Dorsolateral prefrontal cortex (tissue), 120 donors: ENCODE measurements at regions of chr20 and their contacts with region 1.

Region 1: GRCh38 chr20:53547664-53548239 is 45.9 kb downstream of the ZNF217 start:
- DNase-seq: peak in 2 of 10 donors; percentile 4 to 31
- H3K4me3 ChIP-seq: no peak overlapping the region
- H3K27ac ChIP-seq: no peak overlapping the region
- H3K27me3 ChIP-seq: no peaks in the 10 kb centered on the region
- CTCF ChIP-seq: peak in 55 of 56 donors; percentile 36 to 80 (median 73)

Region 2: DNA sequence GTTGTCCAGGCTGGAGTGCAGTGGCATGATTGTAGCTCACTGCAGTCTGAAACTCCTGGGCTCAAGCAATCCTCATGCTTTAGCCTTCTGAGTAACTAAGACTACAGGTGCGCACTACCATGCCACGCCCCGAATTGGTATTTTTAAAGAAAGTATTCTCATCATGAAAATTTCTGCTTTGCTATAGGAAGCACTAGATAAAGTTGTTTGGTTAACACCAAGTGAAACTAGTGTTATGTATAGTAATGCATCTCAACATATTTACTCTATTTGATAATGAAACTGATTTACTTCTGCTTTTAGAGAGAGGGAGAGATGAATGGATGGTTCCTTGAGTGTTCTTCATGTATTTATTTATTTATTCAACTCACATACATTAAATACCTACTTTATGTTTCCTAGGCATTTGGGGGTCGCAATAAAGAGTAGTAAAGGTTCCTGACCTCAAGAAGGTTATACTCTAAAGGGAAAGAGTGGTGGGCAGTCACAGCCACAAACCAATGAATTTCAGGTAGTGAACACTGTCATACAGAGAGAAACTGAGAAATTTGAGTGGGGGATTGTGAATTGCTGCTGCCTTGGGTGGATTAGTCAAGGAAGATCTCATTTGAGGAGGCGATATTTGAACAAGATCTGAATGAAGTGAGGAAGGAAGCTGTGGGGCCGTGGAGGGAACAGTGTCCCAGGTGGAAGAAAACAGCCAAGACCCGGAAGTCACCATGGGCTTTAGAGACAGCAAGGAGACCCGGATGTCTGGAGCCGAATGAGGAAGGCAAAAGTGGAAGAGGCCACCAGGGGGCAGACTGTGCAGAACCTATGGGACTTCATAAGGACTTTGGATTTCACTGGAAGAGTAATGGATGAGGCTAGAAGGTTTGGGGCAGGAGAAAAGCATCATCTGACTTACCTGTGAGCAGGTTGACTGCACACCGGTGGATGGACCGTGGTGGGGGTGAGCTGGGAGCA is 390.0 kb before region 1 on chr20:
- intact Hi-C with region 1: loop called in 1 of 2 experiments (anchors 10 kb)
- DNase-seq: peak in 4 of 10 donors; percentile 25 to 46 (median 35)
- H3K4me3 ChIP-seq: no peak overlapping the region
- H3K27ac ChIP-seq: no peak overlapping the region
- H3K27me3 ChIP-seq: peaks cover 0 to 10% (median 0%) of the 10 kb centered on the region in 45 donors
- CTCF ChIP-seq: peak in 50 of 56 donors; percentile 17 to 58 (median 43)

Region 3: DNA sequence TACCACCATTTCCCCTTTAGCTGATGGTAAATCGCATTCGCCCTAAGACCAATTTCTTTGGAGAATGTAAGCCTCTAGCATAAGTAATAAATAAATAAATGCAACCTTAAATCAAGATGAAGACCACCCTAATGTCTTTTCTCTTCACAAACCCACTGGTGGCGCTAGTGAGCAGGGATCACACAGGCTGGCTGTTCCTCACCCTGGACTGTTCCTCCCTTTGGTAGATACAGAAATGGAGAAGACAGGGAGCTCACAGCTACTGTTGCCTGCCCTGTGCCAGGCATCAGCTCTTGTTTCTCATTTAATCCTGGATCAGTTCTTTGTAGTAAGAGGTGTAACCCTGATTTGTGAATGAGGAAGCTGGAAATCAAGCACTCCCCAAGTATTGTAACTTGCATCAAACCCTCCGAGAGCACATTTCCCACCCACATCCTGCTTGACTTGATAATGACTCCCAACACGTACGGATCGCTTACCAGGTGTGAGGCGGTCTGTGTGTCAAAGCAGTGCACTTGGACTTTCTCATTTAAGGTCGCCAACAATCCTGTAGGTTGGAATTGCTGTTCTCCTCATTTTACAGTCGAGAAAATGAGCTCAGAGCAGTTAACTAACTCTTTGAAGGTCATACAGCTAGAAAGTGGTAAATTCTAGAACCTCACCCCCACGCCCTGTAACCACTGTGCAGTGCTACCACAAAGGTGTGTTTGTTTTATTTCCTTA is 339.5 kb before region 1 on chr20:
- intact Hi-C with region 1: no loop called
- DNase-seq: no peak
- H3K4me3 ChIP-seq: no peak overlapping the region
- H3K27ac ChIP-seq: no peak overlapping the region
- H3K27me3 ChIP-seq: peaks cover 0 to 8% (median 0%) of the 10 kb centered on the region in 45 donors
- CTCF ChIP-seq: no peak